Dendritic cell treated with granulocyte-macrophage colony-stimulating factor and Interleukin-4, amounts not matched to agents 40 ng/mL and 50 ng/mL, for 4 days (primary cell): ENCODE measurements at regions of chr6 and their contacts with region 1.

Region 1: DNA sequence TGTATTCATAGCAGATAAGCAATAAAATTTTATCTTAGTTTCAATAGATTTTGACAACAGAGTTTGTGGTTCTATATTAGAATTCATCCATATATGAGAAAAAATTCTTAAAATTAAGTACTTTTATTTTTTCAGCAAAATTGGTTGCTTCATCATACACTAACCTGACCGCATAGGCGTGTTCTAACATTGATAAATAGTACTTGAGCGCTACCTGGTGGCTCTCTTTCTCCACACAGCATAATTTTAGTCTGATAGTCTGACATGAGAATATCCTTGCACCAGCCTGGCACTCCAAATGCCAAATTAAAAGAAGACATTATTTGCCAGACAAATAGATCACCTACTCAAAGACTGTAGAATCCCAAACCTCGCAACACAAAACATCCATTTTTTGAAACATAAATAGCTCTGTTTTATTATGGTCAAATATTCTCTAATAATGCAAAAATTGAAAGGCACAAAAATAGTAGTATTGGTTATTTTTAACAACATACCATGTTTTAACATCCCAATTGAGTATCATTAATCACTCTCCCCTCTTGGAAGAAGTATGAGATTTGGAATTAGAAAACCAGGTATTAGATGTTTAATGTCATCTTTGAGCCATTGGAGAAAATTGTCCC is 33.0 kb upstream of the FILIP1 start:
- H3K4me3 Mint-ChIP-seq: no peak overlapping the region
- H3K27ac Mint-ChIP-seq: no peak overlapping the region
- H3K4me1 Mint-ChIP-seq: no peaks in the 10 kb centered on the region
- H3K27me3 Mint-ChIP-seq: peaks cover 11% of the 10 kb centered on the region

Region 2: GRCh38 chr6:73732845-73733675 is 1793.6 kb before region 1 on chr6:
- intact Hi-C with region 1: loop called (anchors 10 kb)
- H3K4me3 Mint-ChIP-seq: no peak overlapping the region
- H3K27ac Mint-ChIP-seq: no peak overlapping the region
- H3K4me1 Mint-ChIP-seq: peaks cover 5% of the 10 kb centered on the region
- H3K27me3 Mint-ChIP-seq: no peaks in the 10 kb centered on the region

Region 3: DNA sequence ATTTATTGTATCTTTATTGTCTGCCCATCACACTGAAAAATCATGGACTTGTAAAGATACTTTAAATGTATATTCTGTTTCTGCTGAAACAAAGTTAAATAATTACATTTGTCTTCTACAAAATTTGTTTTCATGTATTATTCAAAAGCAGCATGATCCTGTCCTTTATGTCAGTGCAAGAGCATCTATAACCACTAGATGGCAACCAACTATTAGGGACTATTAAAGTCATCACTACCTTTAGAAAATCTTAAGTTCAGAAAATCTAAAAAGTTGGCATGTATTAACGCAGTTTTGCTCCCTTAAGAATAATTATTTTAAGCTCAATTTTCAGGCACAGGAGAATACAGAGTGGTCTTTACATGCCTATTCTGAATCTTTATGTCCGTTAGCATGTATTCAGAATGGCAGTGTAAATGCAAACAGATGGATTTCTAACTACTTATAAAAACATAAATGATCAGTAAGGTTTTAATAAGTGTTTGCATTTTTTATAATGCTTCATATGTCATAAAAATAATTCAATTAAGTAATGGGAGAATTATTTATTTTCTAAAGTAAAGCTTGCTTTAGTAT is 259.8 kb before region 1 on chr6:
- intact Hi-C with region 1: loop called (anchors 1 kb)
- H3K4me3 Mint-ChIP-seq: no peak overlapping the region
- H3K27ac Mint-ChIP-seq: no peak overlapping the region
- H3K4me1 Mint-ChIP-seq: peaks cover 22% of the 10 kb centered on the region
- H3K27me3 Mint-ChIP-seq: no peaks in the 10 kb centered on the region

Region 4: GRCh38 chr6:75296811-75297779 is 229.5 kb before region 1 on chr6:
- intact Hi-C with region 1: loop called (anchors 1 kb)
- H3K4me3 Mint-ChIP-seq: no peak overlapping the region
- H3K27ac Mint-ChIP-seq: no peak overlapping the region
- H3K4me1 Mint-ChIP-seq: peaks cover 13% of the 10 kb centered on the region
- H3K27me3 Mint-ChIP-seq: no peaks in the 10 kb centered on the region

Region 5: GRCh38 chr6:75620381-75621304 is 94.0 kb after region 1 on chr6:
- intact Hi-C with region 1: no loop called
- H3K4me3 Mint-ChIP-seq: no peak overlapping the region
- H3K27ac Mint-ChIP-seq: no peak overlapping the region
- H3K4me1 Mint-ChIP-seq: peaks cover 34% of the 10 kb centered on the region
- H3K27me3 Mint-ChIP-seq: no peaks in the 10 kb centered on the region